Right cardiac atrium (tissue), 5 donors: ENCODE measurements at regions of chr11 and their contacts with region 1.

Region 1: DNA sequence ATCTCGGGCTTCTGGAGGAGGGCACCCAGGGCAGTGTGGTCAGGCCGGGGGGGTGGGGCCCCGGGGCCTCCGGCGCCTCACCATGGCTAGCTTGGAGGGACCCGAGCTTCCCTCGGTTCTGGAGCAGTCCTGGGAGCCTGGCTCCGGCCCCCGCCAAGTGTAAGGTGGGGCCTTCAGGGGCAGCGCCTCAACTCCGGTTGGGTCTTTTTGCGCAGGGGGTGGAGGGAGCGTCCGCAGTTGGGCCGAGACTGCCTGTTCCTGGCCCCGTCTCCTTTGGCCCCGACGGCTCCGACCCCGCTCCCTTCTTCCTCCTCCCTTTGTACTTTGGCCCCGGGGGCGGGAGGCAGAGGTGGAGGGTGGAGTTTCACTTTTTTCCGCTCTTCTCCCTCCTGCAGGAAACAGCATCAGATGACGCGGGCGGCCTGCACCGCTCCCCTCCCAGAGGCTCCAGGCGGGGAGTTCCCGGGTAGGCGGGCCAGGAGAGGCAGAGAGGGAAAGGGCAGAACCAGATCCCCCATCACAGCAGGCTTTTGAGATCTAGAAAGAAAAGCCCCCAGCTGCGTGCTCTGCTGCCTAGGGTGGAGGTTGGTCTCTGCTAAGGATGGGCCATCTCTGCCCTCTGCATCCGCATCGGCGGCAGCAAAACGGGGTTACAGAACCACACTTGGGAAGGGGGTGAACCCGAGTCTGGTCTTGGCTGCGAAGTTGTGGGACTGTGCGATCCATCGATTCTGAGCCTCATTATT is at the start of gene MAP3K11:
- DNase-seq: peak; percentile 96 to 98 (median 97)
- ATAC-seq: peak; percentile 81 to 82
- H3K4me3 ChIP-seq: peak within 1 kb of the TSS; percentile 82
- H3K27ac ChIP-seq: peak within 1 kb of the TSS; percentile 93
- H3K4me1 ChIP-seq: peaks cover 5% of the 10 kb centered on the region
- H3K27me3 ChIP-seq: no peaks in the 10 kb centered on the region
- total RNA-seq, gene MAP3K11: 35.0 to 41.2 (median 38.1) TPM

Region 2: GRCh38 chr11:65575568-65576231 is 38.4 kb before region 1 on chr11 and contains the start of gene EHBP1L1:
- intact Hi-C with region 1: loop called in 1 of 4 experiments (anchors 5 kb)
- DNase-seq: peak; percentile 81 to 93 (median 93)
- ATAC-seq: peak; percentile 3 to 9
- H3K4me3 ChIP-seq: peak within 1 kb of the TSS; percentile 84
- H3K27ac ChIP-seq: peak within 1 kb of the TSS; percentile 92
- H3K4me1 ChIP-seq: peaks cover 14% of the 10 kb centered on the region
- H3K27me3 ChIP-seq: no peaks in the 10 kb centered on the region
- total RNA-seq, gene EHBP1L1: 43.9 to 80.2 (median 48.2) TPM

Region 3: DNA sequence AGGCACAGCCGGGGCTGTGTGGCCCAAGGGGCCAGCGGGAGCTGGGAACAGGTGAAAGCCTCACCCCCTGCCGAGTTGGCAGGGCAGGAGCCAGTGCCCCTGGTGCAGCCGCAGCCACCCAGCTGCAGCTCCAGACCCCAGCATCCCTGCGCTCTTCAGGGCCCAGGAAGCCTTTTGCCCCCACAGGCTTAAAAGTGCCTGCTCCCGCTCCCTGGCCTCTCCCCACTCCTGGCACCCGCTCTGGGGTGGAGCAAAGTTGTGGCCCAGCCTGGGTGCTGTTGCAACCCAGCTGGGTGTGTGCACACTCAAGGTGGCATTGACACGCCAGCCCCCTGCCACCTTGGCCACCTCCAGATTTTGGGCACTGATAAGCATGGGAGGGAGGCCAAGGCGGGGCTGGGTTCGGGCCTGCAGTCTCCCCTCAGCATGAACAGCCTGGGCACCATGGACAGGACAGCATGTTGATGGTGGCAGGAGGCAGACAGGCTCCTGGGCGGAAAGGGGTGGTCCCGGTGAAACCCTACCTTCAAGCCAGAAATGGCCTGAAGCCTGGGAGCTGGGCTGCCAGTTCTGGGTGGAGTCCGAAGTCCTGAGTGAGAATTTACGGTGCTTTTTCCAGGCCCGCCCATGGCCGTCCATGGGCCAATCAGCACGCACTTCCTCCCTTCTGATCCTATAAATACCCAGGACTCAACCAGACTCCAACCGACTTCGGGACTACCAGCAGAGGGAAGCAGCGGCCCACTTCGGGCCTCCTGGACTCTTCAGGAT is 130.0 kb after region 1 on chr11:
- intact Hi-C with region 1: no loop called
- DNase-seq: peak in 1 of 3 donors; percentile 17
- ATAC-seq: peak; percentile 51 to 57
- H3K4me3 ChIP-seq: no peak overlapping the region
- H3K27ac ChIP-seq: no peak overlapping the region
- H3K4me1 ChIP-seq: no peaks in the 10 kb centered on the region
- H3K27me3 ChIP-seq: no peaks in the 10 kb centered on the region